Endothelial cell of umbilical vein (primary cell): ENCODE measurements at regions of chr6 and their contacts with region 1.

Region 1: DNA sequence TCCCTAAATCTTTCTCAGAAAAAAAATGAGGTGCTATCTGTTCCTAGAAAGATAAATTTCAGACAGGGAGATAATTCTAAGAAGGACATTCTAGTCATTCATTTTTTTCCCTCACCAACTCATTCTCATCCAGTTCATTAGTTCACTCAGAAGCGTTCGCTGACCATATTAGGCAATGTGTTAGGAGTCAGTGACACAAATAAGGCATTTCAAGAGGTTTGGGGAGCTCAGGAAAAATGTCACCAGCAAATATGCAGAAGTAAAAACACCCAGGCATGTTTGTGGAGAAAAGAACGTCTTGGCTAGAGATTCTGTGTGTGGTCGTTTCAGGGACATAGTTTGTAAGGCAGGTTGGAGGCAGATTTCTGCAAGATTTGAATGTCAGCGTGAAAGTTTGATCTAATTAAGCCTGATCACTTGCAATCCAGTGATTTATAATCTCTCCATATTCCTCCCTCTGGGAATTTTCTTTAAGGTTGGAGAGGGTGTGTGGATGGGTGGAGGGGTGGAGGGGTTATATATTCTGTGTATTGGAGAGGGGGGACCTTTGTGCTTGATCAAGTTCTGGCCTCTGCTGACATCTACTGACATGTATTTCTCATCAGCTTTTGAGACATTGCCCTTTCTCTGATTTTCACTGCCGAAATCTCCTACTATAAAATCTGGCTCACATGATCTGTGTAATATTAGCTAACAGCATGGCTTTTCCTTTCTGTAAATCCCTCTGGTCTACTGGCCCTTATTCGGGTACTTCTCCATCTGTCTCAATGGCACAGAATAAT is 3.6 kb downstream of the MYCT1 start:
- DNase-seq: peak; percentile 59
- H3K4me3 ChIP-seq: peak overlapping the region; percentile 57 to 97 (median 88)
- H3K27ac ChIP-seq: peak overlapping the region; percentile 92
- H3K4me1 ChIP-seq: peaks cover 42% of the 10 kb centered on the region
- H3K27me3 ChIP-seq: no peaks in the 10 kb centered on the region
- CTCF ChIP-seq: peak in 1 of 2 donors; percentile 3
- POLR2A ChIP-seq: no peak

Region 2: GRCh38 chr6:152380993-152381898 is 320.0 kb before region 1 on chr6:
- CTCF ChIA-PET with region 1: interaction called, 3 read pairs
- POLR2A ChIA-PET with region 1: interaction called, 5 read pairs
- dilution Hi-C with region 1: no loop called
- intact Hi-C with region 1: loop called (anchors 1 kb)
- DNase-seq: peak; percentile 95
- H3K4me3 ChIP-seq: peak overlapping the region; percentile 50 to 84 (median 53)
- H3K27ac ChIP-seq: peak overlapping the region; percentile 96
- H3K4me1 ChIP-seq: peaks cover 23% of the 10 kb centered on the region
- H3K27me3 ChIP-seq: no peaks in the 10 kb centered on the region
- CTCF ChIP-seq: no peak
- POLR2A ChIP-seq: no peak

Region 3: DNA sequence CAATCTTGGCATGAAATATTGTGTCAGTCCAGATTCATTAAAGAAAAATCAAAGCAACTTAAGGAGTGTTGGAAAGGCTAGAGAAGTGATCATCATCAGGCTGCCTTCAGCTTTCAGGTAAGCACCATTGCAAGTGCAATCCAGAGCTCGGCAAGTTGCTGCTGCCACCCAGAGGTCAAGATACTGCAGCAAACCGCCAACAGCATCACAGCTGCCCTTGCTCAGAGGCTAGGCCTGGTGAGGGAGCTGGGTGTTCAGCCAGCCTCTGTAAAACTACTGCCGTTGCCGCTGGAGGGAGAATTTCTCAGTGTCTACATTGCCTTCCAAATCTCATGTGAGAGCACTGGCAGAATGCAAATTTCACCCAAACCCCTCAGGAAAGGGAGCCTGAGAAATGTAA is 58.3 kb before region 1 on chr6:
- CTCF ChIA-PET with region 1: interaction called, 12 read pairs
- POLR2A ChIA-PET with region 1: no interaction called
- dilution Hi-C with region 1: no loop called
- intact Hi-C with region 1: no loop called
- DNase-seq: peak; percentile 59
- H3K4me3 ChIP-seq: no peak overlapping the region
- H3K27ac ChIP-seq: no peak overlapping the region
- H3K4me1 ChIP-seq: no peaks in the 10 kb centered on the region
- H3K27me3 ChIP-seq: peaks cover 0 to under 1% of the 10 kb centered on the region in 2 experiments
- CTCF ChIP-seq: peak; percentile 32 to 71
- POLR2A ChIP-seq: no peak

Region 4: DNA sequence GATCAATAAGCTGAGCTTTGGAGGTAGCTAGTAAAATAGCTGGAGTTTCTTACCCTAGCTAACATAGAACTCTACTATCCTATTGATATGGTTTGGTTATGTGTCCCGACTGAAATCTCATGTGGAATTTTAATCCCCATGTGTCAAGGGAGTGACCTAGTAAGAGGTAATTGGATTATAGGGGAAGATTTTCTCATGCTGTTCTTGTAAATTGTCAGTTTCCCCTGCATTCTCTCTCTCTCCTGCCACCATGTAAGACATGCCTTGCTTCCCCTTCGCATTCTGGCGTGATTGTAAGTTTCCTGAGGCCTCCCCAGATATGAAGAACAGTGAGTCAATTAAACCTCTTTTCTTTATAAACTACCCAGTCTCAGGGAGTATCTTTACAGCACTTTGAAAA is 39.5 kb before region 1 on chr6:
- CTCF ChIA-PET with region 1: no interaction called
- POLR2A ChIA-PET with region 1: no interaction called
- dilution Hi-C with region 1: no loop called
- intact Hi-C with region 1: no loop called
- DNase-seq: no peak
- H3K4me3 ChIP-seq: no peak overlapping the region
- H3K27ac ChIP-seq: no peak overlapping the region
- H3K4me1 ChIP-seq: no peaks in the 10 kb centered on the region
- H3K27me3 ChIP-seq: no peaks in the 10 kb centered on the region
- CTCF ChIP-seq: no peak
- POLR2A ChIP-seq: no peak

Region 5: DNA sequence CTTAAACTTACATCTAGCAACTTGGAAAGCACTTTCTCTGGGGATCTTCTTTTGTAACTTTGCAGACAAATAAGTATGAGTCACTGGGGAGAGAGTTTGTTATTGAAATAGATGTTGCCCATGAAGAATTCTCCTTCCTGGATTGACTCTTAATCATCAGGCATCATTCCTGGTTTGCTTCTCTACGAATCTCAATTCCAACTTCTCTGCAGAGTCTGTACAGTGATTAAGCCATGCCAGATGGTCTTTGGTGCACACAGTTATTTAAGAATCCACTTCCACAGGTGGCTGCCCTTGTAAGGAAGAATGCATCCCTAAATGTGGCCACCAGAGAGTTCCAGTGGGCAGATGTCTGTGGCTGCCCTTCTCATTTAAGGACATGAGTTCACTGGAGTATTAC is 22.1 kb after region 1 on chr6:
- CTCF ChIA-PET with region 1: interaction called, 9 read pairs
- POLR2A ChIA-PET with region 1: interaction called, 15 read pairs
- dilution Hi-C with region 1: no loop called
- intact Hi-C with region 1: loop called (anchors 1 kb)
- DNase-seq: peak; percentile 27
- H3K4me3 ChIP-seq: no peak overlapping the region
- H3K27ac ChIP-seq: peak overlapping the region; percentile 45
- H3K4me1 ChIP-seq: peaks cover 43% of the 10 kb centered on the region
- H3K27me3 ChIP-seq: no peaks in the 10 kb centered on the region
- CTCF ChIP-seq: no peak
- POLR2A ChIP-seq: no peak

Region 6: GRCh38 chr6:153092082-153093013 is 391.1 kb after region 1 on chr6:
- CTCF ChIA-PET with region 1: no interaction called
- POLR2A ChIA-PET with region 1: no interaction called
- dilution Hi-C with region 1: no loop called
- intact Hi-C with region 1: loop called (anchors 5 kb)
- DNase-seq: peak; percentile 81
- H3K4me3 ChIP-seq: peak overlapping the region in 1 of 3 experiments; percentile 21
- H3K27ac ChIP-seq: peak overlapping the region; percentile 78
- H3K4me1 ChIP-seq: peaks cover 39% of the 10 kb centered on the region
- H3K27me3 ChIP-seq: no peaks in the 10 kb centered on the region
- CTCF ChIP-seq: no peak
- POLR2A ChIP-seq: no peak